Caco-2 (cell line): ENCODE measurements at regions of chr17 and their contacts with region 1.

Region 1: GRCh38 chr17:32997753-32998632 is 6.3 kb downstream of the SPACA3 start:
- DNase-seq: peak; percentile 87 to 92
- H3K4me3 ChIP-seq: peak overlapping the region; percentile 6
- H3K4me3 Mint-ChIP-seq: peak overlapping the region; percentile 82
- H3K27ac Mint-ChIP-seq: peak overlapping the region; percentile 92
- H3K4me1 ChIP-seq: peaks cover 12% of the 10 kb centered on the region
- H3K4me1 Mint-ChIP-seq: peaks cover 23% of the 10 kb centered on the region
- H3K27me3 ChIP-seq: no peaks in the 10 kb centered on the region
- H3K27me3 Mint-ChIP-seq: no peaks in the 10 kb centered on the region
- CTCF ChIP-seq: peak; percentile 93 to 94

Region 2: GRCh38 chr17:32349854-32350665 is 647.9 kb before region 1 on chr17 and contains the start of gene ZNF207:
- CTCF ChIA-PET with region 1: no interaction called
- POLR2A ChIA-PET with region 1: no interaction called
- intact Hi-C with region 1: no loop called
- DNase-seq: peak; percentile 96 to 97
- H3K4me3 ChIP-seq: peak within 1 kb of the TSS; percentile 75
- H3K4me3 Mint-ChIP-seq: peak within 1 kb of the TSS; percentile 90
- H3K27ac Mint-ChIP-seq: peak within 1 kb of the TSS; percentile 99
- H3K4me1 ChIP-seq: peaks cover 26% of the 10 kb centered on the region
- H3K4me1 Mint-ChIP-seq: peaks cover 1% of the 10 kb centered on the region
- H3K27me3 ChIP-seq: no peaks in the 10 kb centered on the region
- H3K27me3 Mint-ChIP-seq: no peaks in the 10 kb centered on the region
- CTCF ChIP-seq: no peak
- total RNA-seq, gene ZNF207: 211 and 213 TPM in 2 replicates

Region 3: GRCh38 chr17:32909787-32910369 is 88.1 kb before region 1 on chr17:
- CTCF ChIA-PET with region 1: interaction called, 3 read pairs
- POLR2A ChIA-PET with region 1: no interaction called
- intact Hi-C with region 1: loop called (anchors 1 kb)
- DNase-seq: peak; percentile 88 to 90
- H3K4me3 ChIP-seq: no peak overlapping the region
- H3K4me3 Mint-ChIP-seq: no peak overlapping the region
- H3K27ac Mint-ChIP-seq: no peak overlapping the region
- H3K4me1 ChIP-seq: peaks cover 37% of the 10 kb centered on the region
- H3K4me1 Mint-ChIP-seq: peaks cover 19% of the 10 kb centered on the region
- H3K27me3 ChIP-seq: no peaks in the 10 kb centered on the region
- H3K27me3 Mint-ChIP-seq: no peaks in the 10 kb centered on the region
- CTCF ChIP-seq: peak; percentile 84

Region 4: DNA sequence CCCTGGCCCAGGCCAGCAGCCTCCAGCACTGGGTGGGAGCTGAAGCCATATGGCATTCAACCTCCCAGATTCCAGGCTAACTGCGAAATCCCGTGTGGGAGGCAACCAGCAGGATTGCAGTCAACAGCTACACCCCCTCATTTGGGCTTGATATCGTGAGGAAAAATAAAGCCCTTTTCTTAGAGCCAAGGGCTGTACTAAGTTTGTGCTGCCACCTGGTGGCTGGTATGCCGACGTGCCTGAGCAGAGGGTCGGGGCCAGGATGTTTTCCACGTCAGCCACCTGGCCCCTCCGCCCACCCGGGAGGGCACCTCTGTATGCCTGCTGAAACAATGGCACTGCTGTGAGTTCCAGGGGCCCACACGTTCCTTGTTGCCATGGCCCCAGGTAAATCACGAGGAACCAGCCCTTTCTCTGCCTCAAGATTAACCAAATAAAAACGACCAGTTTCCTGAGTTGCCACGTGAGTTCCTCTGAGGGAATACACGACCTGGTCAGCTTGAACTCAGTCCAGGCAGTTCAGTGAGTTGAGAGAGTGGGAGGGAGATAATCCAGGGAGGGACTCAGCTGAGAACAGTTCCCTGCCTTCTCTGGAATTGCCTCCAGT is 61.0 kb before region 1 on chr17:
- CTCF ChIA-PET with region 1: interaction called, 40 read pairs
- POLR2A ChIA-PET with region 1: interaction called, 3 read pairs
- intact Hi-C with region 1: no loop called
- DNase-seq: peak; percentile 74 to 81
- H3K4me3 ChIP-seq: no peak overlapping the region
- H3K4me3 Mint-ChIP-seq: no peak overlapping the region
- H3K27ac Mint-ChIP-seq: peak overlapping the region; percentile 31
- H3K4me1 ChIP-seq: 0 out of 2 replicates have a peak, but pooled peaks cover 8% of the 10 kb centered on the region
- H3K4me1 Mint-ChIP-seq: no peaks in the 10 kb centered on the region
- H3K27me3 ChIP-seq: no peaks in the 10 kb centered on the region
- H3K27me3 Mint-ChIP-seq: no peaks in the 10 kb centered on the region
- CTCF ChIP-seq: peak; percentile 89 to 90

Region 5: GRCh38 chr17:32954477-32954876 is 43.5 kb before region 1 on chr17:
- CTCF ChIA-PET with region 1: interaction called, 11 read pairs
- POLR2A ChIA-PET with region 1: no interaction called
- intact Hi-C with region 1: no loop called
- DNase-seq: peak; percentile 66 to 79
- H3K4me3 ChIP-seq: no peak overlapping the region
- H3K4me3 Mint-ChIP-seq: peak overlapping the region; percentile 61
- H3K27ac Mint-ChIP-seq: peak overlapping the region; percentile 39
- H3K4me1 ChIP-seq: peaks cover 36% of the 10 kb centered on the region
- H3K4me1 Mint-ChIP-seq: peaks cover 33% of the 10 kb centered on the region
- H3K27me3 ChIP-seq: no peaks in the 10 kb centered on the region; the same call in 1 of the 2 replicates
- H3K27me3 Mint-ChIP-seq: no peaks in the 10 kb centered on the region
- CTCF ChIP-seq: no peak

Region 6: DNA sequence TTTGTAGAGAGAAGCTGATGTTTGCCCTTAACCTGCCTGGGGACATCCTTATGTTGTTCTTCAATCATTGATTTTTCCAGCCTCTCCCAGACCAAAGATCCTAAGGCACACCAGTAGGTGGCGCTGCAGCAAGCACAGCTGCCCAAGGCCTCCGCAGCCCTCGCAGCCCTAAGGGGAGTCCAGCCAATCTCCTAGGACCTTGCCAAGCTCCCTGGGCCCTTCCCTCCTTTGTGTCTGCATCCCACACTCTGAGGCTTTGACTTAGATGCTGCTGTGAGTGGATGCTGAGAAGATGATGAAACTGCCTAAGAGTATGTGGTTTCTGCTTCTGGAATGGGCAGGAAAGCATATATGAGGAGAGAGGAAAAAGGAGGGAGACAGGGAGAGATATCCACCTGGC is 40.7 kb after region 1 on chr17:
- CTCF ChIA-PET with region 1: no interaction called
- POLR2A ChIA-PET with region 1: no interaction called
- intact Hi-C with region 1: no loop called
- DNase-seq: peak in 1 of 2 experiments; percentile 37
- H3K4me3 ChIP-seq: no peak overlapping the region
- H3K4me3 Mint-ChIP-seq: no peak overlapping the region
- H3K27ac Mint-ChIP-seq: no peak overlapping the region
- H3K4me1 ChIP-seq: no peaks in the 10 kb centered on the region
- H3K4me1 Mint-ChIP-seq: no peaks in the 10 kb centered on the region
- H3K27me3 ChIP-seq: no peaks in the 10 kb centered on the region
- H3K27me3 Mint-ChIP-seq: peaks cover 13% of the 10 kb centered on the region
- CTCF ChIP-seq: peak; percentile 58 to 63